ENCODE measurements at regions of chr7 and their contacts with region 1.

Region 1: DNA sequence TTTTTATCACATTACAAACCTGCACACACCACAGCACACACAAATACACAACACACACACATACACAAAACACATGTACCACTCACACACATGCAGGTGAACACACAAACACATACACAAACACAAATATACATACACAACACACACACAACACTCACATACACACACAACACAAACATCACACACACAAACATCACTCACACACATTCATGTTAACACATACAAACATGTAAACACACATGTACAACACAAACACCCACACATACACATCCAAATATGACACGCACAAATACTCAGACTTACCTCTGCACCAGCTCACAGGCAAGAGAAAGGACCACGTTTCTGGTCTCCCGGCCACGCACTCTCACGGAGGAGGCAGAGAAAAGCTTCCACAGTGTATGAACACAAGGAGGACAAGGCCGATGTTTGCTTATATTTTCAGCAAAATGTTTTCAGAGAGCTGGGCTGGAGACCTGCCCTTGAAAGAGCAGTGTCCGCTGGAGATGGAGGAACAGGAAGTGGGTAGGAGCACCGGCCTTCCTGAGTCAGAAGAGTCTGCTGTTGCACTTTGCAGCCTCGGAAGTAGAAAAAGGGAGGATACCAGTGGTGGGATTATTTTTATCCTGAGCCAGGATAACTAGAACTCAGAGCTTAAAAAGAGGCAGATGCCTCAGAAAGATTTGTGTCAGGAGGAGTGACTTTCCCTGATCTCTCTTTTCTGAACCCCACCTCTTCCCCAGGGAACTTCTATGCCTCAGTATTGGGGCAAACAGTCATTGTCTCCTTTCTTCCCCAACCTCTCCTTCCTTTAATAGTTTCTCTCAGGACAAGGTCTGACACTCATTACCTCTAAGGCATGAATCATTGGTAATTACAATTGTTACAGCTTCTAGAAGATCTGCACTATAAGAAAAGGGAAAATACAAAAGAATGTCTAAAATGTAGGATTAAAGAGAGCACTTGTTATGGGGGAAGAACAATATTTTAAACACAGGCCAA is at the start of gene GIMAP6:
- DNase-seq: peak in 8 of 9 experiments; percentile 33 to 79 (median 50)
- ATAC-seq: peak; percentile 61
- H3K4me3 ChIP-seq: peak within 1 kb of the TSS; percentile 82 to 85
- H3K4me3 Mint-ChIP-seq: peak within 1 kb of the TSS; percentile 97
- H3K27ac ChIP-seq: peak within 1 kb of the TSS; percentile 58 to 83
- H3K27ac Mint-ChIP-seq: peak within 1 kb of the TSS; percentile 96
- H3K4me1 ChIP-seq: peaks cover 54% of the 10 kb centered on the region
- H3K4me1 Mint-ChIP-seq: peaks cover 86% of the 10 kb centered on the region
- H3K27me3 ChIP-seq: no peaks in the 10 kb centered on the region
- H3K27me3 Mint-ChIP-seq: no peaks in the 10 kb centered on the region
- CTCF ChIP-seq: no peak
- total RNA-seq, gene GIMAP6: 10.5 to 10.8 TPM

Region 2: DNA sequence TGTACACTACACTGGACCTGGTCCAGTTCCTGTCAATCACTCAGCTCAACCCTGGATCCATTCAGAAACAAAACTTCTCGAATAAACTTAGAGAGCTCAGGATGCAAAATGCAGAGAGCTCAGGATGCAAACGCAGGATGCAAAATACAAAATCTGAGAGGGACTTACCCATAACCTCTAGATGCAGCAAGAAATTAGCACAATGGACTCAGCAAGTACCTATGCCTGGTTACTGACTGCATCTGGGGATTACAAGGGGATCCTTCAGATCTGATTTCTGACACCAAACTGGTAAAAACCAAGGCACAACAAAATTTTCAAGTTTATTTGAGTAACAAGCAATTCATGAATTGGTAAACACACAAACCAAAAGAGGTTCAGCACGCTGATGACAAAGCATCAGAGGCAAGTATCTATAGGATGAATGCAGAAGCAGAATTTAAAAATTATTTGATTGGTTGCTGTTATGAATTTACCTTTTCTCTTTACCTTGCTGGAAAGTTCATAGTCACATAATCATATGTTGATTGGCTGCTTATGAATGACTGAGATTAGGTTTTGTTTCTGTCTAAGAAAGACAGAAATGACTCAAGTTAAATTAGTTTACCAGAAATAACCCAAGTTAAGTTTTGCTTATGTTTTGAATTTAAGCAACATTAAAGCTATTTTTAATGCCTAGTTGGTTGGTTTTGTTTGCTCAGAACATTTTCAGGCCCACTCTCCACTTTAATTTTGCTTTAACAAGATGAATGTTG is 11.4 kb before region 1 on chr7:
- CTCF ChIA-PET with region 1: interaction called, 6 read pairs
- POLR2A ChIA-PET with region 1: interaction called, 16 read pairs
- intact Hi-C with region 1: no loop called
- DNase-seq: no peak
- ATAC-seq: no peak
- H3K4me3 ChIP-seq: no peak overlapping the region
- H3K4me3 Mint-ChIP-seq: no peak overlapping the region
- H3K27ac ChIP-seq: peak overlapping the region in 1 of 2 experiments; percentile 21
- H3K27ac Mint-ChIP-seq: peak overlapping the region; percentile 87
- H3K4me1 ChIP-seq: peaks cover 32% of the 10 kb centered on the region
- H3K4me1 Mint-ChIP-seq: peaks cover 58% of the 10 kb centered on the region
- H3K27me3 ChIP-seq: no peaks in the 10 kb centered on the region
- H3K27me3 Mint-ChIP-seq: no peaks in the 10 kb centered on the region
- CTCF ChIP-seq: no peak

Region 3: GRCh38 chr7:150675714-150676113 is 43.5 kb after region 1 on chr7:
- CTCF ChIA-PET with region 1: no interaction called
- POLR2A ChIA-PET with region 1: interaction called, 44 read pairs
- intact Hi-C with region 1: no loop called
- DNase-seq: no peak
- ATAC-seq: no peak
- H3K4me3 ChIP-seq: peak overlapping the region in 1 of 2 experiments; percentile 24
- H3K4me3 Mint-ChIP-seq: peak overlapping the region; percentile 36
- H3K27ac ChIP-seq: peak overlapping the region; percentile 12 to 70
- H3K27ac Mint-ChIP-seq: peak overlapping the region; percentile 83
- H3K4me1 ChIP-seq: peaks cover 69% of the 10 kb centered on the region
- H3K4me1 Mint-ChIP-seq: peaks cover 81% of the 10 kb centered on the region
- H3K27me3 ChIP-seq: no peaks in the 10 kb centered on the region
- H3K27me3 Mint-ChIP-seq: no peaks in the 10 kb centered on the region
- CTCF ChIP-seq: no peak

Region 4: GRCh38 chr7:150703209-150703608 is 71.0 kb after region 1 on chr7:
- CTCF ChIA-PET with region 1: no interaction called
- POLR2A ChIA-PET with region 1: no interaction called
- intact Hi-C with region 1: no loop called
- DNase-seq: no peak
- ATAC-seq: no peak
- H3K4me3 ChIP-seq: no peak overlapping the region
- H3K4me3 Mint-ChIP-seq: no peak overlapping the region
- H3K27ac ChIP-seq: no peak overlapping the region
- H3K27ac Mint-ChIP-seq: no peak overlapping the region
- H3K4me1 ChIP-seq: no peaks in the 10 kb centered on the region
- H3K4me1 Mint-ChIP-seq: peaks cover 7% of the 10 kb centered on the region
- H3K27me3 ChIP-seq: no peaks in the 10 kb centered on the region
- H3K27me3 Mint-ChIP-seq: no peaks in the 10 kb centered on the region
- CTCF ChIP-seq: no peak

Region 5: DNA sequence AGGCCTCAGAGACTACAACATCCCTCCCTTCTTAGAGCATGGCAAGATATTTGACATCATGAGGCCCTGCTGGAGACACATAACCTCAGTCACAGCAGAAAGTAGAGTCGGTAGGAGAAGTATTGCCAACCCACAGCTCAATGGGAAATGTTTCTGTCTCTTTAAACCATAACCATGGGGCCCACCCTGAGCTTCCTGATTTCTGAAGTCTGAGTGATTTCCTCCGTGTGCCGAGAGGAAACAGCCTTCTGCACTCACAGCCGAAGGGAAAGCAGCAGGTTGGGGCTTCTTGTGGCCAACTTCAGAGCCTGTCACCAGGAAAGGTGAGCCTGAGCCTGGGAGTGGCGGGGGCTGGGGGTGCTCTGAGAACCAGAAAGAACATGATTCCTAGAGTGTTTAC is 84.2 kb after region 1 on chr7 and contains the start of gene GIMAP1:
- CTCF ChIA-PET with region 1: interaction called, 12 read pairs
- POLR2A ChIA-PET with region 1: interaction called, 23 read pairs
- intact Hi-C with region 1: no loop called
- DNase-seq: peak in 8 of 9 experiments; percentile 59 to 85 (median 73)
- ATAC-seq: peak; percentile 84
- H3K4me3 ChIP-seq: peak within 1 kb of the TSS; percentile 90 to 91
- H3K4me3 Mint-ChIP-seq: peak within 1 kb of the TSS; percentile 95
- H3K27ac ChIP-seq: peak within 1 kb of the TSS; percentile 73 to 87
- H3K27ac Mint-ChIP-seq: peak within 1 kb of the TSS; percentile 96
- H3K4me1 ChIP-seq: peaks cover 50% of the 10 kb centered on the region
- H3K4me1 Mint-ChIP-seq: peaks cover 67% of the 10 kb centered on the region
- H3K27me3 ChIP-seq: no peaks in the 10 kb centered on the region
- H3K27me3 Mint-ChIP-seq: no peaks in the 10 kb centered on the region
- CTCF ChIP-seq: no peak
- total RNA-seq, gene GIMAP1: 6.1 to 6.2 TPM

Region 6: GRCh38 chr7:151110941-151111645 is 478.9 kb after region 1 on chr7:
- CTCF ChIA-PET with region 1: no interaction called
- POLR2A ChIA-PET with region 1: no interaction called
- intact Hi-C with region 1: no loop called
- DNase-seq: peak; percentile 54 to 84 (median 78)
- ATAC-seq: peak; percentile 80
- H3K4me3 ChIP-seq: no peak overlapping the region
- H3K4me3 Mint-ChIP-seq: no peak overlapping the region
- H3K27ac ChIP-seq: no peak overlapping the region
- H3K27ac Mint-ChIP-seq: no peak overlapping the region
- H3K4me1 ChIP-seq: no peaks in the 10 kb centered on the region
- H3K4me1 Mint-ChIP-seq: peaks cover 6% of the 10 kb centered on the region
- H3K27me3 ChIP-seq: peaks cover 2 to 8% of the 10 kb centered on the region in 2 experiments
- H3K27me3 Mint-ChIP-seq: peaks cover 9% of the 10 kb centered on the region
- CTCF ChIP-seq: peak; percentile 75

Region 7: DNA sequence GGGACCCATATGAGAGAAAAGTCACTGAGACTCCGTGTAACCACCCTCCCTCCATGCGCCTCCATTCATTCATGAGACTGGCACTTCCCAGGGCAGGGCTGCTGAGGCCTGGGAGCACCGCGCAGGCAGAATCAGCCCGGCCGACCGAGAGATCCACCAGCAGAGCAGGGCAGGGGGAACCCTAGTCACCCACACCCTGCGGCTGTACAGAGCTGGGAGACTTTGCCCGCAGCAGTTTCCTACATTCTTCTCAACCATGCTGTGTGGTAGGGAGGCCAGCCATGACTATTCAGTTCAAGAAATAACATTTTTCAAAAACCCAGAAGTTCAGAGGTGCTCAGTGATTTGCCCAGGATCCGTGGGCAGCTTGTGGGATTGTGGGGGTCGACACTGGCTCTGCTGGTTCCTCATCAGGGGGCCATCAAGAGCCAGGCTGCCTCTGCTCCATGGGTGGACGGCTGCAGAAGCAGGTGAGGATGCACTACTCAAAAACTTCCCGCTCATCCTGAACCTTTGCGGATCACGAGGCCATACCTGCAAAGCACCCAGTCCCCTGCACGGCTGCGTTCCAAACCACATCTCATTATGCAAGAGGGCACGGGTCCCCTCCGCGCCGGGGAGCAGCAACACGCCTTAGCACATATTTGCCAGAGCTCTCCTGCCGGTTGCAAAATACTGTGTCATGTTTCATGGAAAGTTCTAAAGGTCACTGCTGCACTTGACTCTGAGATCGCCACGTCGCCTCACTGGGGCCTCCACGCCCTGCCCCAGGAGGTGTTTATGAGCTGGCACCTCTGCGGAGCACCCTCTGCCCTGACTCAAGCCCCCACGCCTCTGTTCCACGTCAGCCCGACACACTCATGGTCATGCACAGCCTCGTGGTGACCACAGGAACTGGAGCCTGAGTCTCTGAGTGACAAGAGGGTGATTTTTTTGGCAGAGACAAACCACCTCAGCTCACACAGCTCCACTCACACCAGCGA is 1112.8 kb after region 1 on chr7:
- CTCF ChIA-PET with region 1: no interaction called
- POLR2A ChIA-PET with region 1: no interaction called
- intact Hi-C with region 1: no loop called
- DNase-seq: peak in 1 of 9 experiments; percentile 39
- ATAC-seq: no peak
- H3K4me3 ChIP-seq: no peak overlapping the region
- H3K4me3 Mint-ChIP-seq: no peak overlapping the region
- H3K27ac ChIP-seq: no peak overlapping the region
- H3K27ac Mint-ChIP-seq: no peak overlapping the region
- H3K4me1 ChIP-seq: peaks cover 22% of the 10 kb centered on the region
- H3K4me1 Mint-ChIP-seq: peaks cover 24% of the 10 kb centered on the region
- H3K27me3 ChIP-seq: no peaks in the 10 kb centered on the region
- H3K27me3 Mint-ChIP-seq: no peaks in the 10 kb centered on the region
- CTCF ChIP-seq: no peak